Ovary (tissue), 10 donors: ENCODE measurements at regions of chr6 and their contacts with region 1.

Region 1: GRCh38 chr6:138765896-138766655 is 7.5 kb upstream of the CCDC28A start:
- DNase-seq: no peak
- H3K4me3 ChIP-seq: no peak overlapping the region
- H3K27ac ChIP-seq: no peak overlapping the region
- H3K4me1 ChIP-seq: no peaks in the 10 kb centered on the region
- H3K27me3 ChIP-seq: no peaks in the 10 kb centered on the region
- CTCF ChIP-seq: peak in 2 of 3 donors; percentile 25 to 51
- EP300 ChIP-seq: no peak
- POLR2A ChIP-seq: no peak

Region 2: GRCh38 chr6:138129190-138129589 is 636.9 kb before region 1 on chr6:
- intact Hi-C with region 1: loop called in 1 of 4 experiments (anchors 5 kb)
- DNase-seq: no peak
- H3K4me3 ChIP-seq: no peak overlapping the region
- H3K27ac ChIP-seq: no peak overlapping the region
- H3K4me1 ChIP-seq: no peaks in the 10 kb centered on the region
- H3K27me3 ChIP-seq: no peaks in the 10 kb centered on the region
- CTCF ChIP-seq: no peak
- EP300 ChIP-seq: no peak
- POLR2A ChIP-seq: no peak

Region 3: DNA sequence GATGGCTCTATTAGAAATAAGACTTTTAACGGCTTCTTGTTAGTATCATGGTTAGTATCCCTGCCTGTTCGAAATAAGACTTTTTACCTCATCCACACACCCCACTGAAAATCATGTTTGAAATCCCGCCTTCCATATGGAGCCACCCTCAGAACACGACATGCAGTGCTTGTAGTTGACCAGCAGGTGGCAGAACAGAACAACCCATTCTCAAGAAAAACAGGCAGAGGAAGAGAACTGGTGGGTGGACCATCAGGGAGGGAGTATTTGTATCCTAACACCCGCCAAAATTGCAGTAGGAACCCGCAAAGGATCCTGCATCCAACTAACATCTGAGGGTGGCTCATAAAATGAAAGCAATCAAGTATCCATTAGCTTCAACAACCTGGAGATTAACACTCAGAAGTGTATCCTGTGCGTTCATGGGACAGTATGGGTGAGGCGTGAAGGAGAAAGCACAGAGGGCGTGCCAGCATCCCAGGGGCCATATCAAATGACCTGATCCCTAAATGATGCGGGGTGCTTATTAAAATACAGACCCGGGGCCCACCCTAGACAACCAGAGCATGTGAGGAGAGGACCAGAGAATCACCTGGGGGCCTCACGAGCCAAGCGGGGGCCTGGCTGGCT is 177.2 kb before region 1 on chr6:
- intact Hi-C with region 1: loop called in 2 of 4 experiments (anchors 5 to 10 kb)
- DNase-seq: peak; percentile 23 to 62 (median 45)
- H3K4me3 ChIP-seq: no peak overlapping the region
- H3K27ac ChIP-seq: no peak overlapping the region
- H3K4me1 ChIP-seq: peaks cover 1% of the 10 kb centered on the region
- H3K27me3 ChIP-seq: no peaks in the 10 kb centered on the region
- CTCF ChIP-seq: peak; percentile 57 to 68 (median 62)
- EP300 ChIP-seq: no peak
- POLR2A ChIP-seq: no peak

Region 4: GRCh38 chr6:139068846-139069245 is 302.8 kb after region 1 on chr6:
- intact Hi-C with region 1: no loop called
- DNase-seq: no peak
- H3K4me3 ChIP-seq: no peak overlapping the region
- H3K27ac ChIP-seq: no peak overlapping the region
- H3K4me1 ChIP-seq: no peaks in the 10 kb centered on the region
- H3K27me3 ChIP-seq: no peaks in the 10 kb centered on the region
- CTCF ChIP-seq: no peak
- EP300 ChIP-seq: no peak
- POLR2A ChIP-seq: no peak